Activated naive CD4-positive, alpha-beta T cell treated with anti-CD3 and anti-CD28 coated beads for 36 hours (primary cell): ENCODE measurements at regions of chr9 and their contacts with region 1.

Region 1: DNA sequence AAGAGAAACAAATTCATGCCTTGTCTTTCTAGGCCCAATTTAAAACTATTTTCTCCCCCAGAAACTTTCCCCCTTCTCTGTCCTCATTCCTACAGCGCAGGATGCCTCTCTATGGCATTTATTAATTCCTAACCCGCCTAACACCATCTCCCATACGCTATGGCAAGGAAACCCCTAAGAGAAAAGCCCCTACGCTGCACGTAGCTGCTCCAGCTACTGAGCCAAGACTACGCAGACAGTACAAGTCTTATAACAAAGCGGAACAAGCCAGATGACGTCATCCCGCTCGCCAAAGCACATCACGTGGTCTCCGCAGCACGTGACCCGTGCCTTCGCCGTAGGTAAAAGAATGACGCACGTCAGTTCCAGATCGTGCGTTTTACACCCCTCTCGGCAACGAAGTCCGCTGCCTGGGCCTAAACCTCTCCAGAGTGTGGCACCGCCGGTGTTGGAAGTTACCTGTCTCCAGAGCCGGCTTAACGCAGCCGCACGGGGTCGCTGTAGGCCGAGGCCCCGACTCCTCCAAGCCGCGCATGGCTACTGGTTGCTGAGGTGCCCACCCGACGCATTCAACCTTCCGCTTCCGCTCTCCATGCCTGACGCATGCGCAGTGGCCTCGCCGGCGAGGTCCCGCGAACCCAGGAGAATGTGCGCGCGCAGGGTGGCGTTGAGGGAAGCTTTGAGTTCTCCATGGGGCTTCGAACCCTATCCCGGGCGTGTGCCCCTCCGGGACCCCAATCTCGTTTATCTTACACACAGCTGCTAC is at the start of gene TRMO:
- DNase-seq: peak; percentile 98
- H3K4me3 Mint-ChIP-seq: peak within 1 kb of the TSS; percentile 86
- H3K27ac Mint-ChIP-seq: peak within 1 kb of the TSS; percentile 97
- H3K4me1 Mint-ChIP-seq: peaks cover 35% of the 10 kb centered on the region
- H3K27me3 Mint-ChIP-seq: peaks cover 5% of the 10 kb centered on the region
- total RNA-seq, gene TRMO: 10.7 to 10.8 TPM

Region 2: GRCh38 chr9:97632985-97633858 is 288.9 kb before region 1 on chr9 and contains the starts of genes NCBP1 and TSTD2:
- CTCF ChIA-PET with region 1: no interaction called
- intact Hi-C with region 1: loop called (anchors 1 kb)
- DNase-seq: peak; percentile 98
- H3K4me3 Mint-ChIP-seq: peak within 1 kb of the TSS; percentile 88
- H3K27ac Mint-ChIP-seq: peak within 1 kb of the TSS; percentile 97
- H3K4me1 Mint-ChIP-seq: peaks cover 53% of the 10 kb centered on the region
- H3K27me3 Mint-ChIP-seq: no peaks in the 10 kb centered on the region
- total RNA-seq, gene NCBP1: 32.4 to 33.9 TPM
- total RNA-seq, gene TSTD2: 11.1 to 12.4 TPM

Region 3: GRCh38 chr9:97906236-97906831 is 15.8 kb before region 1 on chr9:
- CTCF ChIA-PET with region 1: interaction called, 114 read pairs
- intact Hi-C with region 1: loop called (anchors 1 kb)
- DNase-seq: peak; percentile 66
- H3K4me3 Mint-ChIP-seq: peak overlapping the region; percentile 80
- H3K27ac Mint-ChIP-seq: peak overlapping the region; percentile 98
- H3K4me1 Mint-ChIP-seq: peaks cover 69% of the 10 kb centered on the region
- H3K27me3 Mint-ChIP-seq: no peaks in the 10 kb centered on the region

Region 4: DNA sequence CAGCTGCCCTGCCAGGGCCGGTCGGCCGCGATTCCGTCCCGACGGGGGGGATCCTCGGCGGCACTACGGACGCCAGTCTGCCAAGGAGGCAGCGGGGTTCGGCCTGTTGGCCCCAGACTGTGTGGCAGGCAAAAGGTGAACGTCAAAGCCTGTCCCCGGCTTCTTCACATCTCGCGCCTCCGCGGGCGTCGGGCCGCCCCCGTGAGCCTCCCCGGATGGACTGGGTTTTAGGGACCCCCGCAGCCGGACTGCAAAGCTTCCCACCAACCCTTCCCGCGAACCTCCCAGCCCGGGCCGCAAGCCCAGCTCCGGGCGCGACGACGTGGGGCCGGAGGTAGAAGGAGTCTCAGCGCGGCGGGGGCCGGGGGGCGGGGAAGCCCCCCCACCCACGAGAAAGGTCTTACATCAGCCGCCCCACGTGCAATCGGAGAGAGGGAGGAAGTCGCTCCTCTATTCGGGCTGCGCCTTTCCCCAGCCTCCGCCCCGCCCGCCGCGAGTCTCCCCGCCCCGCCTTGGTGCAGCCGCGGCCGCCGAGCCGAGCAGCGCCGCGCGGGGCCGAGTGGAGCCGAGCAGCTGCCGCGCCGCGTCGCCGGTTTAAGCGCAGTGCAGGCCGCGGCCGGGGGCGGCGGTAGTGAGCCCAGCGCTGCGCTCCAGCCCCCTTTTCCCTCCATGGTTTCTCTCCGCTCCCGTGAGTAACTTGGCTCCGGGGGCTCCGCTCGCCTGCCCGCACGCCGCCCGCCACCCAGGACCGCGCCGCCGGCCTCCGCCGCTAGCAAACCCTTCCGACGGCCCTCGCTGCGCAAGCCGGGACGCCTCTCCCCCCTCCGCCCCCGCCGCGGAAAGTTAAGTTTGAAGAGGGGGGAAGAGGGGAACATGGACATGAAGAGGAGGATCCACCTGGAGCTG is 60.8 kb after region 1 on chr9 and contains the start of gene ANP32B:
- CTCF ChIA-PET with region 1: interaction called, 61 read pairs
- intact Hi-C with region 1: loop called (anchors 1 kb)
- DNase-seq: peak; percentile 96
- H3K4me3 Mint-ChIP-seq: peak within 1 kb of the TSS; percentile 82
- H3K27ac Mint-ChIP-seq: peak within 1 kb of the TSS; percentile 94
- H3K4me1 Mint-ChIP-seq: peaks cover 45% of the 10 kb centered on the region
- H3K27me3 Mint-ChIP-seq: no peaks in the 10 kb centered on the region
- total RNA-seq, gene ANP32B: 412 to 414 TPM

Region 5: DNA sequence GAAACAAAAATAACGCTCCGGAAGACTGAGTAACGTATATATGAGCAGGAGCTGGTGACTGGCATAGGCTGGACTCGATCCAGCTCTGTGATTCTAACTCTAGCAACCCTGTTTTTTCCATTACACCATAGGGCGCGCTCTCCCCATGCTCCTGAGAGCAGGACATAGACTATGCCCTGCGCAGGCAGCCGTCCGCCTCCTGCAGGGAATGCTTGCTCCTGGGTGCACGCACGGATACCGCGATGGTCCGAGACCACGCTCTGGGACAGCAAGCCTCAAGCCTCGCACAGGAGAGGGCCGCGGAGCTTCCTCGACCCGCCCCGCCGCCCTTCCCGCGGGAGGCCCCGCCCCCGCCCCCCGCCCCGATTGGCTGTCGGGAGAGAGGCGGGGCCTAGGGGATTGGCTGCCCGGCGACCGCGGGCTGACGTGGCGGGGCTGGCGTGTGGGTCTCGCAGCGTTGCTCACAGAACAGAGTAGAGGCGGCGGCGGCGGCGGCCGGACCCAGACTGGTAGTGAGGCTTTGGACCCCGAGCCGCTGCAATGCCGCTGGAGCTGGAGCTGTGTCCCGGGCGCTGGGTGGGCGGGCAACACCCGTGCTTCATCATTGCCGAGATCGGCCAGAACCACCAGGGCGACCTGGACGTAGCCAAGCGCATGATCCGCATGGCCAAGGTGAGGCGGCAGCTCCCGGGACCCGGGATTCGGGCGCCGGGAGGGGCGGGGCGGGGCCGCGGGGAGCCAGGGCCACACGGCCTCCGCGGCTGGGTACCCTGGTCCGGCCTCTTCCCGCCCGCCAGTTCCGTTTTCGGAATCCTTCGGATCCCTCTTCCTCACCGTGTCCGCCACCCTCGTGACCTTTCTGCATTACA is 134.4 kb after region 1 on chr9 and contains the start of gene NANS:
- CTCF ChIA-PET with region 1: interaction called, 5 read pairs
- intact Hi-C with region 1: loop called (anchors 1 kb)
- DNase-seq: peak; percentile 93
- H3K4me3 Mint-ChIP-seq: peak within 1 kb of the TSS; percentile 94
- H3K27ac Mint-ChIP-seq: peak within 1 kb of the TSS; percentile 92
- H3K4me1 Mint-ChIP-seq: peaks cover 27% of the 10 kb centered on the region
- H3K27me3 Mint-ChIP-seq: no peaks in the 10 kb centered on the region
- total RNA-seq, gene NANS: 46.1 to 51.0 TPM

Region 6: DNA sequence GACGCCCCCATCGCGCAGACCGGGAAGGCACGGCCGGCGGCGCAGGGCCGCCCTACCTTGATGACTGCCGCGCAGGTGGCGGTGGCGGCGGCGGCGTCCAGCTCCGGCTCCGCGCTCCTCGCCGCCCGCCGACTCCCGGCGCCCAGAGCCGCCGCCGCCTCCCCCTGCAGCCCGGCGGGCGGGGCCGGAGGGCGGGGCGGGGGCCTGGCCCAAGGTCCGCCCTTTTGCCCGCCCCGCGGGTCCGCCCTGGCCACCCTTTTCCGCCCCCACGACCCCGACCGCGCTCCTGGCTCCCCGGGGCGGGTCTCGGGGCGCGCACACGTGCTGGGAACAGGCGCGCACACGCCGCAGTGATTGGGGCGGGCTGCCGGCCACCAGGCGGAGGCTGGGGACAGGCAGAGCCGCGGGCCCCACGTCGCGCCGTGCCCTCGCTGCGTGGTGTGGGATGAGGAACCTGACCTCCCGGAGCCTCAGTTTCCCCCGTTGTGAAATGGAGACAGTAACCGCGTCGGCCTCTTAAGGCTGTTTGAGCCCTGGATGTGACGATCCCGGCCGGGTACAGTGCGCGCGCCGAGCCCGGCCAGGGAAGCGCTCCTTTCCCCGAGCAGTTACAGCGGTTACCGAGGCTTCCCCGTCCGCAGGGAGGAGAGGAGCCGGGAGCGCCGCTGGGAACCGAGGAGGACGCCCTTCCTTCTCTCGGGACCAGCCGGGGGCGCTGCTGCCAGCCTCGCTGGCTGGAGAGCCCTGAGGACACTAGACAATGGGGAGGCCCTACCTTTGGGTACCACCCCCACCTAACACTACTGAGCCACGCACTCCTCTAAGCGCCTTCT is 270.6 kb after region 1 on chr9 and contains the start of gene CORO2A:
- CTCF ChIA-PET with region 1: interaction called, 3 read pairs
- intact Hi-C with region 1: loop called (anchors 1 kb)
- DNase-seq: peak; percentile 64
- H3K4me3 Mint-ChIP-seq: peak within 1 kb of the TSS; percentile 82
- H3K27ac Mint-ChIP-seq: peak within 1 kb of the TSS; percentile 56
- H3K4me1 Mint-ChIP-seq: peaks cover 27% of the 10 kb centered on the region
- H3K27me3 Mint-ChIP-seq: no peaks in the 10 kb centered on the region
- total RNA-seq, gene CORO2A: 8.1 to 8.2 TPM

Region 7: GRCh38 chr9:98280574-98280973 is 358.4 kb after region 1 on chr9:
- CTCF ChIA-PET with region 1: no interaction called
- intact Hi-C with region 1: no loop called
- DNase-seq: no peak
- H3K4me3 Mint-ChIP-seq: no peak overlapping the region
- H3K27ac Mint-ChIP-seq: no peak overlapping the region
- H3K4me1 Mint-ChIP-seq: no peaks in the 10 kb centered on the region
- H3K27me3 Mint-ChIP-seq: peaks cover 2% of the 10 kb centered on the region